OCI-LY7 (cell line): ENCODE measurements at regions of chr12 and their contacts with region 1.

Region 1: DNA sequence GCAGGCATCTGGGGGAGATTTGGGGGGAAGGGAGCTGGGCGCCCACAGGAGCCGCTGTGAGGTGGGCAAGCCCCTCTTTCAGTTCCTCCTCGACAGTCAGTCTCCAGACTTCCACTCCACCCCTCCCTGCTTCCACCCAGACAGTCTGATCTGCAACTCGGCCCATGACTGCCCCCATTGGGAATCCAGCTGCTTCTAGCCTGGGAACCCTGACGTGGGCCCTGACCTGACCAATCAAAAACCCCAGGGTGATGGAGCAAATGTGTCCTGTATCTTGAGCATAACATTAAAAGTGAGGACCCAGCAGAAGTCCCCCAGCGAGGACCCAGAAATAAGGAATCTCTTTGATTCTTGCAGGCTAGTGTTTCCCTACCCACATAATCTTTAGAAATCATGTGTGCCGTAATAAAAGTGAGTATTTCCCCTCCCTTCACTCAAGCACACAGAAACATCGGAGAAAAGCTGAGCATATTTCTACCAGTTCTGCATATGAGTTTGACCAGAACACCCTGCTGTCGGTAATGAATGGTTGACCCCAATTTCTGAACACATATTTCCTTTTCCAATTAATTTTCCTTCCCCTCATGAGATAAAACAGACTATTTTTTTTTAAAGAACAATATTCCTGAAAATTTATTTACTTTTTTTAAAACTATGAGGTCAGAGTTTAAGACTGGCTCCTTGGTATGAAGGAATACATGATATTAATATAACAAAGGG is 6.4 kb downstream of the SSH1 start:
- DNase-seq: peak; percentile 55
- H3K4me3 ChIP-seq: no peak overlapping the region
- H3K27ac ChIP-seq: no peak overlapping the region
- H3K4me1 ChIP-seq: peaks cover 12% of the 10 kb centered on the region
- CTCF ChIP-seq: peak; percentile 39

Region 2: DNA sequence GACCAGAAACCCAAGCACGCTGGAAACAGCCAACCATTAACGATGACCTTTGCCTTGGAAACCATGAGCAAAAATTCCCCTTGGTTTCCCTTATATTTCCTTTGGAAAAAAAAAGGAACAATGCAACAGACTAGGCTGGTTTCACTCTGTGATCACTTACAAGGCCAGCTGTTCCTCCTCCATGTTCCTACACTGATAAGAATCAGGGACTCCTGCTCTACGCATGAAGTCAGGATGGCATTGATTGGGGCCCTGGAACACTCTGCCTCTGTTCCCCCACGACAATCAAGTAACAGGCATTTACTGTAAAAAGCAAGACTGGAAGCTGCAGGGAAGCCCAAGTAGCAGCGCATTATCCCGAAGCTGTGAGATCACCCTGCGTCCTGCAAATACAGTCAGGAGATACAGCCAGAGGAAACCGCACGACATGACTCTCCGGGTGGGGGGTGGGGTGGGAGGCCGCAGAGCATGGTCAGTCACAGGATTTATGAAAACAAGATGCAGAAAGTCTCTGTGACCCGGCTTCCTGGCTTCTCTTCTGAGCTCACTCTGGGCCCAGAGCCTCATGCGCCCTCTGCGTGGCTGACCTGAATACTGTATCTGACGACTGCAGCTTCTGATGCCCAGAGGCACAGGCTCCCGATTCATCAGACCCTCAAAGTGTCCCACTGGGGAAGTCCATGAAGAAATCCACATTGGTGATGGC is 24.8 kb before region 1 on chr12:
- CTCF ChIA-PET with region 1: interaction called, 14 read pairs
- POLR2A ChIA-PET with region 1: no interaction called
- intact Hi-C with region 1: no loop called
- DNase-seq: no peak
- H3K4me3 ChIP-seq: no peak overlapping the region
- H3K27ac ChIP-seq: no peak overlapping the region
- H3K4me1 ChIP-seq: peaks cover 7% of the 10 kb centered on the region
- CTCF ChIP-seq: no peak

Region 3: GRCh38 chr12:109234012-109234411 is 383.0 kb after region 1 on chr12:
- CTCF ChIA-PET with region 1: interaction called, 13 read pairs
- POLR2A ChIA-PET with region 1: no interaction called
- intact Hi-C with region 1: no loop called
- DNase-seq: no peak
- H3K4me3 ChIP-seq: no peak overlapping the region
- H3K27ac ChIP-seq: no peak overlapping the region
- H3K4me1 ChIP-seq: no peaks in the 10 kb centered on the region
- CTCF ChIP-seq: no peak